Activated naive CD4-positive, alpha-beta T cell treated with anti-CD3 and anti-CD28 coated beads, Interleukin-2, amount 10 ng/mL, durations not matched to agents 7 days and 5 days (primary cell): ENCODE measurements at regions of chr17 and their contacts with region 1.

Region 1: GRCh38 chr17:63425482-63425881 is 20.6 kb downstream of the CYB561 start:
- DNase-seq: peak; percentile 82
- H3K4me3 Mint-ChIP-seq: no peak overlapping the region
- H3K27ac Mint-ChIP-seq: no peak overlapping the region
- H3K4me1 Mint-ChIP-seq: peaks cover 59% of the 10 kb centered on the region
- H3K27me3 Mint-ChIP-seq: peaks cover 34% of the 10 kb centered on the region

Region 2: DNA sequence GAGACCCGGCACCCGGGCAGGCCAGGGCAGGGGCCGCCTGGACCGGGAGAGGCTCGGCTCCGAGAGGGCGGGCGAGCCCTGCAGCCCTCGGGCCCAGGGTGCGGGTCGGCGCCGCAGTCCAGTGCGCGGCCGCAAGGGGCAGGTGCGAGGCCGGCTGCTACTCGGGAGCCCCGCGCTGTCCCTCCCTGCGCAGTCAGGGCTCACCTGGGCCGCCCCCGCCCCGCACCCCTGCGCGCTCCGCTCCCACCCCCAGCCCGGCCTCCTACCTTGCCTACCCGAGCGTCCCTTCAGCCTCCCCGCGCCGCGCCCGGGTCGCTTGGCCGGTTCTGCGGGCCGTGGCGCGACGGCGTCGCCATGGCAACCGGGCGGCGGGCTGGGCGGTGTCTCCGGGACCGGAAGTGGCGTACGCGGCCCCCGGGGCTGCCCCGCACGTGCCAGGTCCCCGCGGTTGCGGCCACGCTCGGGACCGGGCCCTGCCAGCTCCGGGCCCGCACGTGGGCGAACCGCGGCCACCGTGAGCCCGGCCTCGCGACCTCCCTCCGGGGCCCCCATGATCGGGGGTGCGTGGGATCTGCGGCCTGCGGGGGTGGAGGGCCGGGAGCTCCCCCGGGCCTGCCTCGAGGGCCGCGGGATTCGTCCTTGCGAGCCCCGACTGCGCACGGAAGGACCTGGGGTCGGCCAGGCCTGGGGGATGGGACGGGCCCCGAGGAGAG is 20.7 kb after region 1 on chr17 and contains the start of gene CYB561:
- CTCF ChIA-PET with region 1: interaction called, 14 read pairs
- DNase-seq: peak; percentile 76
- H3K4me3 Mint-ChIP-seq: peak within 1 kb of the TSS; percentile 54
- H3K27ac Mint-ChIP-seq: peak within 1 kb of the TSS; percentile 45
- H3K4me1 Mint-ChIP-seq: peaks cover 36% of the 10 kb centered on the region
- H3K27me3 Mint-ChIP-seq: peaks cover 75% of the 10 kb centered on the region

Region 3: DNA sequence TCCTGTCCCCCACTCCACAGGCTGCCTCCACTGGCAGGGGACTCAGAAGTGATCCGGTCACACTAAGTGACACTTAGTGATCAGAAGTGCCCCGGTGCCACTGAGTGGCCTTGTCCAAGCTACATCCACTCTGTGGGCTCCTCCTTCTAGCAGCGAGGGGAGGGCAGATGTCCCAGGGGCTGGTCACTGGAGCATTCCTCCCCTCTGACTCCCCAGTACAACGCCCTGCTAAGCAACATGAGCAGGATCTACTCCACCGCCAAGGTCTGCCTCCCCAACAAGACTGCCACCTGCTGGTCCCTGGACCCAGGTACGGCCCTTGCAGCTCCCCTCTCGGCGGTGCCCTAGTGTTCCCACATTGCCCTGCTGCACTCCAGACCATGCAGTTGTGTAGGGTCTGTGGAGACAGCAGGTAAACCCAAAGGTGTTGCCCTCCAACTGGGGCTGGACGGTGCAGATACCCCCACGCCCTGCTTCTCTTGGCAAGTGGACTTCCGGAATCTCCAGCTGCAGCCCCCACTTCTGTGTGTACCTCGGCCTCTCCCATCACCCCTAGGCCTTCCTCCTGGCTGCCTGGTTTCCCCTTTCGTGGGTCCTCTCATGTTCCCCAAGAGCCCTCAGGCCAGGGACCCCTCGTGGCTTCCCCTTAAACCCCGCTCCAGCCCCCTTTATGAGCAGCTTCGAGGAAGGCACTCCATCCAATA is 53.5 kb after region 1 on chr17:
- CTCF ChIA-PET with region 1: interaction called, 235 read pairs
- DNase-seq: peak; percentile 88
- H3K4me3 Mint-ChIP-seq: peak overlapping the region; percentile 17
- H3K27ac Mint-ChIP-seq: peak overlapping the region; percentile 21
- H3K4me1 Mint-ChIP-seq: peaks cover 18% of the 10 kb centered on the region
- H3K27me3 Mint-ChIP-seq: peaks cover 81% of the 10 kb centered on the region

Region 4: GRCh38 chr17:63600569-63601438 is 175.3 kb after region 1 on chr17 and contains the start of gene TACO1:
- CTCF ChIA-PET with region 1: interaction called, 273 read pairs
- DNase-seq: peak; percentile 83
- H3K4me3 Mint-ChIP-seq: peak within 1 kb of the TSS; percentile 88
- H3K27ac Mint-ChIP-seq: peak within 1 kb of the TSS; percentile 93
- H3K4me1 Mint-ChIP-seq: peaks cover 46% of the 10 kb centered on the region
- H3K27me3 Mint-ChIP-seq: no peaks in the 10 kb centered on the region

Region 5: DNA sequence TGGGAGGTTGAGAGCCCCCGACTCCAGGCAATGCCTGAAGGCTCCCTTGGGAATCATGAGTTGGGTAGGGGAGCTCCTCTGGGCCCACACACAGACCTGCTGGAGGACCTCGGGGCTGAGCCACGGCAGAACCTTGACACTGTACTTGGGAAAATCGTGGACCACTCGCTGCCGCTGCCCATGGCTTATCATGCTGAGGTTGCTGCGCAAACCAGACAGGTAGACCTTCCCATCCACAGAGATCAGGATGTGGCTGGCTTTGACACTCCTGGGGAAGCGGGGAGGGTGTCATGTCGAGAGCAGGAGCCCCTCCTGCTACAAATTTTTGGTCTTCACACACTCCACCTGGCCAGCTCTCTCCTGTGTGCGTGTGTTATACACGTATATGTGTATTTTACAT is 281.7 kb after region 1 on chr17:
- CTCF ChIA-PET with region 1: interaction called, 17 read pairs
- DNase-seq: no peak
- H3K4me3 Mint-ChIP-seq: peak overlapping the region; percentile 38
- H3K27ac Mint-ChIP-seq: peak overlapping the region; percentile 83
- H3K4me1 Mint-ChIP-seq: peaks cover 81% of the 10 kb centered on the region
- H3K27me3 Mint-ChIP-seq: no peaks in the 10 kb centered on the region